ENCODE measurements at regions of chr1 and their contacts with region 1.

Region 1: GRCh38 chr1:36187800-36188593 is 32.0 kb downstream of the MAP7D1 start:
- DNase-seq: peak; percentile 82 to 88
- H3K4me3 ChIP-seq: no peak overlapping the region
- H3K27ac ChIP-seq: peak overlapping the region; percentile 74 to 91
- H3K4me1 ChIP-seq: peaks cover 0 to 3% of the 10 kb centered on the region in 2 donors
- H3K27me3 ChIP-seq: no peaks in the 10 kb centered on the region
- CTCF ChIP-seq: peak; percentile 80 to 97 (median 91)
- POLR2A ChIP-seq: peak; percentile 5 to 14

Region 2: GRCh38 chr1:36123356-36123755 is 64.6 kb before region 1 on chr1:
- intact Hi-C with region 1: no loop called
- DNase-seq: no peak
- H3K4me3 ChIP-seq: no peak overlapping the region
- H3K27ac ChIP-seq: no peak overlapping the region
- H3K4me1 ChIP-seq: peaks cover 0 to 6% of the 10 kb centered on the region in 2 donors
- H3K27me3 ChIP-seq: peaks cover 0 to 3% of the 10 kb centered on the region in 2 donors
- CTCF ChIP-seq: no peak
- POLR2A ChIP-seq: no peak

Region 3: DNA sequence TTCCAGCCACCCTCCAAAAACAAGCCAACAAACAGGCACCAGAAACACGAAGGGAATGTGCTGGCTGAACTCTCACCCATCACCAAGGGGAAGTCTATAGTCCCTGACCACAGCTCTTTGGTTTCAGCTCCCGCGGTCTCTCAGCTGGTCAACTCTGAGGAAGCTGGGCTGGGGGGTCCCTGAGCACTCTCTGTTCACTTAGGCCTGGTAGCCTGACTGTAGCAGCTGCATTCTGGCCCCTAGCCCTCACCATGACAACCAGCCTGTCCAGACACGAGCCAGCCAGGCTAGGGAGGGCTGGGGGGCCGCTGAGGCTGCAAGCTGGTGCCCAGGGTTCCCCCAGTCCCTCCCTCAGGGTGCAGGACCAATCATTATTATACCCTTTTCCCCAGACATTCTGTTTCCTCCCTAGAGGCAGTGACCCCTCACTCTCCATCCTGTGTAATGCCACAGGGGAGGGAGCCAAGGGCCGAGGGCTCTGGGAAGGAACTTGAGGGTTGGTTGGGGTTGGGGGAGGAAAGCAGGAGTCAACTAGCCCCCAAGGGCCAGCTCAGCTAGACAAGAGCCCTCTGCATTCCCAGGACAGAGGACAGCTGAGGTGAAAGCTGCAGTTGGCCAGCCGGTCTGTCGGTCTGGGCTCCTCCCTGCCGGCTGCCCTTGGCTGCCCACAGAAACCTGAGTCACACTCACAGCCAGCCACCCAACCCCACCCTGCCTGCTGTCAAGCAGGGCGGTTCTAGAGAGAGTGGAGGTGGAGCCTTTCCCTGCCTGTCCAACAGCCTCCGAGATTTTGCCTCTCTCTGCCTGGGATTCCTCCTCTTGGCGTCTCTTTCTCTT is 37.5 kb before region 1 on chr1:
- intact Hi-C with region 1: loop called (anchors 2 kb)
- DNase-seq: peak; percentile 89 to 93
- H3K4me3 ChIP-seq: no peak overlapping the region
- H3K27ac ChIP-seq: peak overlapping the region; percentile 89 to 98
- H3K4me1 ChIP-seq: peaks cover 13 to 20% of the 10 kb centered on the region in 2 donors
- H3K27me3 ChIP-seq: no peaks in the 10 kb centered on the region
- CTCF ChIP-seq: no peak
- POLR2A ChIP-seq: peak; percentile 63 to 86